ENCODE measurements at regions of chr4 and their contacts with region 1.

Region 1: GRCh38 chr4:113756005-113756410 is 5.5 kb downstream of the CAMK2D start:
- DNase-seq: peak; percentile 74
- H3K4me3 ChIP-seq: no peak overlapping the region
- H3K27ac ChIP-seq: no peak overlapping the region
- H3K4me1 ChIP-seq: peaks cover 17% of the 10 kb centered on the region
- H3K27me3 ChIP-seq: no peaks in the 10 kb centered on the region
- CTCF ChIP-seq: no peak

Region 2: DNA sequence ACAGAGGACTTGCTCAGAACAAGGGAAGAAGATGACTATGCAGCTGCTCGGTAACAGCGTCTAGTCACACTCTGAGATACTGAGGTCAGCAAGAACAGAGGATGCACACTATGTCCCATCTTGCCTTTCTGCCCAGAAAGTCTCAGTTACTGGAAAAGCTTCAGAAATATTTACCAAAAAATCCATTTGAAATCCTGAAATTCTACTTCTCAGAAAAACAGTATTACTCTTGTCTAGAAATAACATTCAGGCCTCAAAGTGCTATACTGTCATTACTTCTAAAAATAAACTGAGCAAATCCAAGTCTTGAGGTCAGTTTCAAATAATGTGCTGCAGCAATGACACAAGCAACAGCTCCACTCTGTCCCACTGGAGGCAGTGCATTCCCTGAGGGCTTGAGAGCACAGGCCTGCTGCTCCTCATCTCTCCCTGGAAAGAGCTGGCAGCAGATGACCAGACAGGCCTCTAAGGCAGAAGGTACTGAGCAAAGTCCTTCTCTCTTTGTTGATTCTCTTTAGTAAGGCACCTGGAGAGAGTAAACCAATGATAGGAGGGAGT is 71.4 kb before region 1 on chr4:
- CTCF ChIA-PET with region 1: interaction called, 34 read pairs
- dilution Hi-C with region 1: no loop called
- in situ Hi-C with region 1: no loop called
- intact Hi-C with region 1: no loop called
- DNase-seq: no peak
- H3K4me3 ChIP-seq: no peak overlapping the region
- H3K27ac ChIP-seq: no peak overlapping the region
- H3K4me1 ChIP-seq: peaks cover 4% of the 10 kb centered on the region
- H3K27me3 ChIP-seq: no peaks in the 10 kb centered on the region
- CTCF ChIP-seq: peak; percentile 4 to 26